Activated T-helper 1 cell treated with anti-CD3 and anti-CD28 coated beads, Interleukin-12 subunit alpha, Interleukin-12 subunit beta, Interleukin-2, Interleukin-4 antibody, amounts not matched to agents 30 ng/mL and 10 ng/mL and 1 ng/mL, durations not matched to agents 14 hours and 24 hours and 36 hours (primary cell): ENCODE measurements at regions of chr9 and their contacts with region 1.

Region 1: GRCh38 chr9:17571825-17572224 is 7.0 kb upstream of the SH3GL2 start:
- DNase-seq: no peak
- H3K4me3 Mint-ChIP-seq: no peak overlapping the region
- H3K27ac Mint-ChIP-seq: no peak overlapping the region
- H3K4me1 Mint-ChIP-seq: no peaks in the 10 kb centered on the region
- H3K27me3 Mint-ChIP-seq: no peaks in the 10 kb centered on the region

Region 2: DNA sequence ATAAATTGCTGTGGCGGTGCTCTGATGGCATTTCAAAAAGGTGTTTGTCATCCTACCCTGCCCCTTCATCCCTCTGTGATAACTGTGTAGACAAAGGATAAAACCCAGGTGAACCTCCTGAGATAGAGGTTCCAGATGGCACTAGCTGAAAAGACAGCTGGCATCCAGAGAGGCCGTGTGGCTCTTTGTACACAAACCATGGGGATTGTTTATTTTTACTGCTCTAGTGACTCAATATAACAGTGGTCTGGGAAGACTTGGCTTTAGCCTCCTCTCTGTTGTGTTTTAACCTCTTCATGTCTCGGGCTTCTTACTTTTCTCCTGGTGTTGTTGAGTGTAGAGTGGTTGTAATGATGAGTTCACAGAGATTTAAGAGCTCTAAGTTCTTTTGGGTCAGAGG is 55.8 kb after region 1 on chr9:
- intact Hi-C with region 1: loop called (anchors 10 kb)
- DNase-seq: no peak
- H3K4me3 Mint-ChIP-seq: no peak overlapping the region
- H3K27ac Mint-ChIP-seq: no peak overlapping the region
- H3K4me1 Mint-ChIP-seq: no peaks in the 10 kb centered on the region
- H3K27me3 Mint-ChIP-seq: no peaks in the 10 kb centered on the region